ENCODE measurements at regions of chr17 and their contacts with region 1.

Region 1: DNA sequence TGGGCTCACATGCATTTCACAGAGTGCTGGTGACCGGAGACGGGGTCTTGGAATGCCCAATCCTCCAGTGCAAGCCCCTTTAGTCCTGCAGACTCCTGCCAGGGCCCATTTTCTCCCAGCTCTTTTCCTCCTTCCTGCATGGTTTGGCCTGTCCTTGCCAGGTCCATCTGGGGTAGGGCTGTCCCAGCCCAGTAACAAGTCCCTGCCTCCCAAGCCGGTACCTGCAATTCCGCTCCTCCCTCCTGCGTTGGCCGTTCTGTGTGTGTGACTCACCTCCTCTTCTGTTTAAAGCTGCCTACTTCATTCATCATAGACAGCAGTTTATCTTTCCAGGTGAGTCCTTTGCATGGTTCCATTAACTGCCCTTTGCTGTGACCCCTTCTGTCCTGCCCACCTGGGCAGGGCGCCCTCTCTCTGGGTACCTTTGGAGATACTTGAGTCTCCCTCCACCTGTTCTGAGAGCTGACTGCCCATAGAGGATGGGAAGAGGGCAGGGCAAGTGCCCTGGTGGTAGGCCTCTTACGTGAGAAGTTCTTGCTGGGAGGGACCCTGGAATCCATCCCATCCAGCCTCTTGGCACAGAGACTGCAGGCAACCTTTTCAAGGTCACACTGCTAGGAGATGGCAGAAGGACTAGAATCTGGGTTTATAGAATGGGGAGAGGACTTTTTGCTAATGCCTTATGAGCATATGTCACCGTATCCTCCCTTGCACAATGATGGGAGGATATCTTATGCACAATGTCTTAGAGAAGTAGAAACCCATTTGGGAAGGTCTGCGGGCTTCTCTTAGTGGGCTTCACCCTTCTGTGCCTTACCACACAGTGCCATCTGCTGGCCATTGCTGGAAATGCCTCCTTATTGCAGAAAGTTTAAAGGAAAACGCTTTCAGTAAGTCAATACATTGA is 29.7 kb upstream of the LGALS9 start:
- DNase-seq: peak; percentile 67 to 89 (median 81)
- ATAC-seq: peak; percentile 70
- H3K4me3 ChIP-seq: no peak overlapping the region
- H3K4me3 Mint-ChIP-seq: no peak overlapping the region
- H3K27ac ChIP-seq: no peak overlapping the region
- H3K27ac Mint-ChIP-seq: no peak overlapping the region
- H3K4me1 ChIP-seq: no peaks in the 10 kb centered on the region
- H3K4me1 Mint-ChIP-seq: peaks cover 7% of the 10 kb centered on the region
- H3K27me3 ChIP-seq: no peaks in the 10 kb centered on the region
- H3K27me3 Mint-ChIP-seq: no peaks in the 10 kb centered on the region
- CTCF ChIP-seq: peak; percentile 90

Region 2: DNA sequence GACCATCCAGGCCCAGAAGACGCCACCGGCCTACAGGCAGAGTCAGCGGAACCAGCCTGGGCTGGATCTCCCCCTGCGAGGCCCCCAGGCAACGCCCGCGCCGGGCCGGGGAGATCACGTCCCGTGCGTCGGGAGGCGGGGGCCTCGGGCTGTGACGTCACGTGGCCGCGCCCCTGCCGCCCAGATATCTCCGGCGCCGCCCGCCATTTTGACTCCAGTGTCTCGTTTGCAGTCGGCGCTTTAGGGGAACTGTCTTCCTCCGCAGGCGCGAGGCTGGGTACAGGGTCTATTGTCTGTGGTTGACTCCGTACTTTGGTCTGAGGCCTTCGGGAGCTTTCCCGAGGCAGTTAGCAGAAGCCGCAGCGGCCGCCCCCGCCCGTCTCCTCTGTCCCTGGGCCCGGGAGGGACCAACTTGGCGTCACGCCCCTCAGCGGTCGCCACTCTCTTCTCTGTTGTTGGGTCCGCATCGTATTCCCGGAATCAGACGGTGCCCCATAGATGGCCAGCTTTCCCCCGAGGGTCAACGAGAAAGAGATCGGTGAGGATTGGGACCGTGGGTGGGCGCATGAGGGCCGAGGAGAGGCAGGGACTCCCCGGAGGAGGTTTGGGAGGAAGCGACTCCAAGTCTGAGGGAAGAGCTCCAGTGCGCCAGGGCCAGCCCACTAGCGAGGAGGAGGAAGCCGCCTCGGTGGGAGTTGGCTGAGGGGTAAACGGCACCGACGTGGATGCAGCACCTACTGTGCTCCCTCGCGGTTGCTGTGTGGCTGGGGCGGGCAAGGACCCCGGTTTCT is 307.2 kb before region 1 on chr17 and contains the start of gene WSB1:
- CTCF ChIA-PET with region 1: no interaction called
- POLR2A ChIA-PET with region 1: interaction called, 5 read pairs
- intact Hi-C with region 1: loop called in 1 of 2 experiments (anchors 1 kb)
- DNase-seq: peak; percentile 86 to 97 (median 92)
- ATAC-seq: peak; percentile 84
- H3K4me3 ChIP-seq: peak within 1 kb of the TSS; percentile 89 to 99
- H3K4me3 Mint-ChIP-seq: peak within 1 kb of the TSS; percentile 93
- H3K27ac ChIP-seq: peak within 1 kb of the TSS; percentile 98 to 99
- H3K27ac Mint-ChIP-seq: peak within 1 kb of the TSS; percentile 100
- H3K4me1 ChIP-seq: peaks cover 27% of the 10 kb centered on the region
- H3K4me1 Mint-ChIP-seq: peaks cover 36% of the 10 kb centered on the region
- H3K27me3 ChIP-seq: no peaks in the 10 kb centered on the region
- H3K27me3 Mint-ChIP-seq: no peaks in the 10 kb centered on the region
- CTCF ChIP-seq: no peak
- total RNA-seq, gene WSB1: 89.0 to 91.1 TPM

Region 3: DNA sequence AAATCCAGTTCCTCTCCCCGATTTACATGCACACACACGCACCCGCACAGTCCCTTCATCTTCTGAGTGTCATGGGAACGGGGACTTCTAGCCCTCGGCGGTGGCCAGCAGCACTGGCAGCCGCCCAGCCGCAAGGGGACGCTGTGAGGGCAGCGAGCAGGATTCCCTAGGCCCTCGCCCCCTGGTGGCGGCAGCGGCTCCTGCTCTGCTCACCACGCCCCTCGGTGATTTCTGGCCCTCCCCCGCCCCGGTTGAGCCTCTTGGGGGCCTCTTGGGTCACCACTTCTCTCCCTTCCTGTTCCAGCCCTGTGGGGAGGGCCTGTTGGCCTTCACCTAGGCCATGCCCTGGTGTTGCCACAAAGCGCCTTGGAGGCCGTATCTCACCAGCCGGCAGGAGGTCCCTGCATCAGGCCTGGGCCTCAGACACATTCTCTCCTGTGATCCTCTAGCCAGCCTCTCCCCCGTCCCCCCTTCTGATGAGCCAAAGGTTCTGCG is 220.3 kb before region 1 on chr17:
- CTCF ChIA-PET with region 1: interaction called, 21 read pairs
- POLR2A ChIA-PET with region 1: no interaction called
- intact Hi-C with region 1: loop called (anchors 1 kb)
- DNase-seq: peak; percentile 47 to 84 (median 74)
- ATAC-seq: peak; percentile 98
- H3K4me3 ChIP-seq: no peak overlapping the region
- H3K4me3 Mint-ChIP-seq: no peak overlapping the region
- H3K27ac ChIP-seq: no peak overlapping the region
- H3K27ac Mint-ChIP-seq: no peak overlapping the region
- H3K4me1 ChIP-seq: no peaks in the 10 kb centered on the region
- H3K4me1 Mint-ChIP-seq: peaks cover 4% of the 10 kb centered on the region
- H3K27me3 ChIP-seq: no peaks in the 10 kb centered on the region
- H3K27me3 Mint-ChIP-seq: peaks cover 23% of the 10 kb centered on the region
- CTCF ChIP-seq: peak; percentile 84

Region 4: GRCh38 chr17:27569257-27569722 is 32.0 kb before region 1 on chr17:
- CTCF ChIA-PET with region 1: interaction called, 13 read pairs
- POLR2A ChIA-PET with region 1: no interaction called
- intact Hi-C with region 1: no loop called
- DNase-seq: peak; percentile 21 to 88 (median 57)
- ATAC-seq: peak; percentile 98
- H3K4me3 ChIP-seq: no peak overlapping the region
- H3K4me3 Mint-ChIP-seq: no peak overlapping the region
- H3K27ac ChIP-seq: peak overlapping the region in 1 of 2 experiments; percentile 37
- H3K27ac Mint-ChIP-seq: no peak overlapping the region
- H3K4me1 ChIP-seq: peaks cover 4% of the 10 kb centered on the region
- H3K4me1 Mint-ChIP-seq: peaks cover 11% of the 10 kb centered on the region
- H3K27me3 ChIP-seq: no peaks in the 10 kb centered on the region
- H3K27me3 Mint-ChIP-seq: no peaks in the 10 kb centered on the region
- CTCF ChIP-seq: peak; percentile 46

Region 5: DNA sequence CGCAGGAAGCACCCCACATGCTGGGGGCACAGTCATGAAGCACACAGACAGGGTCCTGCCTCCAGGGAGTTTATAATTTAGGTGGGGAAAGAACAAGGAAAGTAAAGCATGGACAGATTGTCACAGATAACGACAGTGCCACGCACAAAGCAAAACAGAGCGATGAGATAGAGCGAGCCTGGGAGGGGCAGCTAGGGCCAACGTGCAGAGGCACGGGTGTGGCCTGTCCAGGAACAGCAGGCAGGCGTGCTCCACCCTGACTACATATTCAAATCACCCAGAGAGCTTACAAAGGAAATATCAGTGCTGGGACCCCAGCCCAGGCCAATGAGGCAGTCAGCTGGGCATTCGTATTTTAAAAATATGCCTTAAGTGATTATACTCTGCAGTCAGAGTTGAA is 46.4 kb after region 1 on chr17:
- CTCF ChIA-PET with region 1: interaction called, 181 read pairs
- POLR2A ChIA-PET with region 1: interaction called, 3 read pairs
- intact Hi-C with region 1: loop called (anchors 1 to 2 kb)
- DNase-seq: no peak
- ATAC-seq: no peak
- H3K4me3 ChIP-seq: no peak overlapping the region
- H3K4me3 Mint-ChIP-seq: no peak overlapping the region
- H3K27ac ChIP-seq: no peak overlapping the region
- H3K27ac Mint-ChIP-seq: no peak overlapping the region
- H3K4me1 ChIP-seq: no peaks in the 10 kb centered on the region
- H3K4me1 Mint-ChIP-seq: no peaks in the 10 kb centered on the region
- H3K27me3 ChIP-seq: no peaks in the 10 kb centered on the region
- H3K27me3 Mint-ChIP-seq: no peaks in the 10 kb centered on the region
- CTCF ChIP-seq: no peak

Region 6: DNA sequence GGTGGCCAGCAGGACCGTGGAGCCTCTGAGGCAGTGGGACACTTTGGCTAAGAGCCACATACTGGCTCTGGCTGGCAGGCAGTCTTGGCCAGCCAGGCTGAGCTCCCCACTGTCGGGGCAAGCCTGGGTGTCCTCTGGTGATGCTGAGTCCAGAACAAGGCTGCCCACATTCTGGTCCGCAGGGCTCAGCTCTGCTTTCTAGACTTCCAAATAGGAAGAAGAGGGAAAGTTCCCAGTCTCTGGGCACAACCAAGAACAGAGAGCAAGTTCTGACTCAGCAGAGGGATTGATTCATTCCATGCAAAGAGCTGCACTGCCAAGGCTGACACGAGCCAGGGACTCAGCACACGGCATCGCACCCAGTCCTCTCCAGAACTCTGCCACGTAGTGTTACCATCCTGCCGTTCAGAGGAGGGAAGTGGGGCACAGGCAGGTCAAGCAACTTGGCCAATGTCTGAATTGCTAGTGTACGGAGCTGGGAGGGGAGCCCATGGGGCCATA is 140.1 kb after region 1 on chr17:
- CTCF ChIA-PET with region 1: no interaction called
- POLR2A ChIA-PET with region 1: no interaction called
- intact Hi-C with region 1: no loop called
- DNase-seq: peak in 1 of 9 experiments; percentile 9
- ATAC-seq: no peak
- H3K4me3 ChIP-seq: no peak overlapping the region
- H3K4me3 Mint-ChIP-seq: no peak overlapping the region
- H3K27ac ChIP-seq: no peak overlapping the region
- H3K27ac Mint-ChIP-seq: no peak overlapping the region
- H3K4me1 ChIP-seq: no peaks in the 10 kb centered on the region
- H3K4me1 Mint-ChIP-seq: no peaks in the 10 kb centered on the region
- H3K27me3 ChIP-seq: peaks cover 0 to 4% of the 10 kb centered on the region in 2 experiments
- H3K27me3 Mint-ChIP-seq: peaks cover 4% of the 10 kb centered on the region
- CTCF ChIP-seq: no peak